PC-3 (cell line): ENCODE measurements at regions of chr17 and their contacts with region 1.

Region 1: DNA sequence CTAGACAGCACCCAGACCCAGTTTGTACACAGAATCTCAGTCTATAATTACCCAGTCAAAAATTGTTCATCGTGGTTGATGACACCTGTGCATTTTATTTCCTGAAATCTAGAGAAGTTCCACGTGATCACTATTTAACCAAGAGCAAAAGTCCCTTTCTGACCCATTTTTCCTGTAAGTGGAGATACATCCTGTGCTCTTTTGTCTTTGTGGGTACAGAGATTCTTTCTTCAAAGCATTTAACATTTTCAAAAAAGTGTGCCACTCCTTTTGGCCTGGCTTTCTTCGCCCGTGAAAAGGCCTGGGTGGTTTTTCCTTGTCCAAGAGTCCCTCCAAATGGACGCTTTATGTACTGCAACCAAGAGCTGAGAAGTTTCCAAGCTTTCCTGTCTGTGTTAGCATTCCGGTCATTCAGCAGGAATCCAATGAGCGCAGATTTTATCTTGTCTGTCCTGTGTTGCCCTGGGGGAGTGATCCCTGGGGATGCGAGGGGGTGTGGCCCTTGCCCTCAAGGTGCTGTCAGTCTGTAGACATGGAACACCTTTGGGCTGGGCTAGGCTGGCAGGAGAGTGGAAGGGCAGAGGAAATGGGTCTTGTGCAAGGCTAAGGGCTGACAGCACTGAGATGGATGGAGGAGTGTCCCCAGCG is 161.1 kb upstream of the CACNG5 start:
- DNase-seq: peak; percentile 92
- ATAC-seq: peak; percentile 32
- H3K4me3 ChIP-seq: no peak overlapping the region
- H3K27ac ChIP-seq: no peak overlapping the region
- H3K4me1 ChIP-seq: peaks cover 42% of the 10 kb centered on the region
- H3K27me3 ChIP-seq: no peaks in the 10 kb centered on the region
- CTCF ChIP-seq: peak; percentile 97

Region 2: GRCh38 chr17:66135896-66136295 is 537.9 kb before region 1 on chr17:
- CTCF ChIA-PET with region 1: no interaction called
- POLR2A ChIA-PET with region 1: no interaction called
- intact Hi-C with region 1: no loop called
- DNase-seq: no peak
- ATAC-seq: no peak
- H3K4me3 ChIP-seq: no peak overlapping the region
- H3K27ac ChIP-seq: no peak overlapping the region
- H3K4me1 ChIP-seq: no peaks in the 10 kb centered on the region
- H3K27me3 ChIP-seq: no peaks in the 10 kb centered on the region
- CTCF ChIP-seq: no peak

Region 3: GRCh38 chr17:66191593-66192382 is 482.0 kb before region 1 on chr17 and contains the start of gene CEP112:
- CTCF ChIA-PET with region 1: interaction called, 3 read pairs
- POLR2A ChIA-PET with region 1: no interaction called
- intact Hi-C with region 1: loop called (anchors 2 kb)
- DNase-seq: peak; percentile 66
- ATAC-seq: peak; percentile 61
- H3K4me3 ChIP-seq: peak within 1 kb of the TSS; percentile 88
- H3K27ac ChIP-seq: peak within 1 kb of the TSS; percentile 30
- H3K4me1 ChIP-seq: peaks cover 13% of the 10 kb centered on the region
- H3K27me3 ChIP-seq: no peaks in the 10 kb centered on the region
- CTCF ChIP-seq: no peak
- total RNA-seq, gene CEP112: 3.3 and 6.5 TPM in 2 replicates

Region 4: GRCh38 chr17:66200685-66201092 is 473.1 kb before region 1 on chr17:
- CTCF ChIA-PET with region 1: interaction called, 7 read pairs
- POLR2A ChIA-PET with region 1: no interaction called
- intact Hi-C with region 1: loop called (anchors 1 kb)
- DNase-seq: peak; percentile 82
- ATAC-seq: peak; percentile 65
- H3K4me3 ChIP-seq: peak overlapping the region; percentile 4; the same call in 1 of the 2 replicates
- H3K27ac ChIP-seq: no peak overlapping the region
- H3K4me1 ChIP-seq: peaks cover 8% of the 10 kb centered on the region
- H3K27me3 ChIP-seq: no peaks in the 10 kb centered on the region
- CTCF ChIP-seq: peak; percentile 95

Region 5: DNA sequence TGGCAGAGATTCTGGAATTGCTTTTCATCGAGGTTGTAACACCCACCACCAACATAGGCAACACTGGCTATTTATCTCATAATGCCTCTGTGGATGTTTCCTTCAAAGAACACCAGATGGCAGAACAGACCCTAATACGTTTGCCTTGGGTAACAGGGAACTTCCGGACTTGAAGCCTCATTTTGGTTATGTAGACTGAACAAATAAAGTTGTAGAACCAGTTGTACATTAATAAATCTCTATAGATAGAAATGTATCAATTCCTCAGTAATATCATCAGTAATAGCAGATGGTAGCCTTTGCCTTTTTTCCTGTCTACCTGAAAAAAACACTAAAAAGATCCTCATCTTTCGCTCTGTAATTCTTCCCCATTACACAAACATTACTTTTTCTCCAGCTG is 418.7 kb before region 1 on chr17:
- CTCF ChIA-PET with region 1: interaction called, 5 read pairs
- POLR2A ChIA-PET with region 1: no interaction called
- intact Hi-C with region 1: loop called (anchors 1 kb)
- DNase-seq: peak; percentile 93
- ATAC-seq: peak; percentile 94
- H3K4me3 ChIP-seq: no peak overlapping the region
- H3K27ac ChIP-seq: no peak overlapping the region
- H3K4me1 ChIP-seq: peaks cover 8% of the 10 kb centered on the region
- H3K27me3 ChIP-seq: no peaks in the 10 kb centered on the region
- CTCF ChIP-seq: peak; percentile 96

Region 6: DNA sequence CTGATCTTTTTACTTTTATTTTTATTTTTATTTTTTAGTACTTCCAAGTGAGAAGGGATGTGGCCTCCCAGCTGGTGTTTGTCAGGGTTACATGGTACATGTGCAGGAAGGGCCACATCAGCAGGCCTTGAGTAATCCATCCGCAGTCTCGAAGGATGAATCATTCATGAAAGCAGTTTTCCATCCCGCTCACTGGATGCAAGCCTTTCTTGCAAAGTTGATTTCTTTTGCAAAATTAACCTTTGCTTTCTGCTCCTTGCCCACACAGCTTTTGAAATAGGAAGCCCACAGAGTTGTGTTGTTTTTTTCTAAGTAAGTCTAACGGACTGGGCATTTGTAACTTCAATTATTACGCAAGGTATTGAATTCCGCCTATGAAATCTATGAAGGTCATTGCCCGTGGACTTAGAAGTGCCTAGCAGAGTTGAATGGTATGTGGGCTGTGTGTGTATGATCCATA is 214.0 kb before region 1 on chr17:
- CTCF ChIA-PET with region 1: no interaction called
- POLR2A ChIA-PET with region 1: no interaction called
- intact Hi-C with region 1: loop called (anchors 5 kb)
- DNase-seq: peak; percentile 97
- ATAC-seq: peak; percentile 91
- H3K4me3 ChIP-seq: peak overlapping the region; percentile 8; the same call in 1 of the 2 replicates
- H3K27ac ChIP-seq: peak overlapping the region; percentile 71
- H3K4me1 ChIP-seq: peaks cover 55% of the 10 kb centered on the region
- H3K27me3 ChIP-seq: no peaks in the 10 kb centered on the region
- CTCF ChIP-seq: no peak

Region 7: DNA sequence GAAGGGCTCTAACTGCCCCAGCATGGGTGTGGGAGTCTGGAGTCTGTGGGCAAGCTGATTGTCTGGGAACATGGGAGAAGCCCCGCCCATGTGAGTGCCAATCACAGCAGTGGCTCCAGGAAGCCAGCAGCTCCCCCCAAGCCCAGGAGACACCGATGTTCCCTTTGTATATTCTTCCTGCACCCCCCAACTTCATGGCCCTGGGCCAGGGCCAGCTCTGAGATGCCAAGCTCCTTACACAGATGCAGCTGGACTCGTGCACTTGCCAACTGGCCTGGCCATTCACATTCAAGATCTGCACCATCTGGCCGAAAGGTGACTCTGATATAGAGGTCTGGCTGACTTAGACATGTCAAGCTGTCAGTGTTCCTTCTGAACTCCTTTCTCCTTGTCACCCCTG is 211.6 kb after region 1 on chr17:
- CTCF ChIA-PET with region 1: no interaction called
- POLR2A ChIA-PET with region 1: no interaction called
- intact Hi-C with region 1: no loop called
- DNase-seq: no peak
- ATAC-seq: no peak
- H3K4me3 ChIP-seq: no peak overlapping the region
- H3K27ac ChIP-seq: no peak overlapping the region
- H3K4me1 ChIP-seq: no peaks in the 10 kb centered on the region
- H3K27me3 ChIP-seq: peaks cover 25% of the 10 kb centered on the region; the same call in 1 of the 2 replicates
- CTCF ChIP-seq: no peak